ENCODE measurements at regions of chr22 and their contacts with region 1.

Region 1: GRCh38 chr22:40024201-40025061 is 29.7 kb downstream of the FAM83F start:
- DNase-seq: no peak
- H3K4me3 ChIP-seq: no peak overlapping the region
- H3K27ac ChIP-seq: no peak overlapping the region
- H3K27me3 ChIP-seq: peaks cover 17% of the 10 kb centered on the region
- CTCF ChIP-seq: peak; percentile 96

Region 2: GRCh38 chr22:39528681-39529486 is 495.5 kb before region 1 on chr22:
- CTCF ChIA-PET with region 1: interaction called, 119 read pairs
- POLR2A ChIA-PET with region 1: interaction called, 3 read pairs
- DNase-seq: peak; percentile 84
- H3K4me3 ChIP-seq: peak overlapping the region; percentile 29; the same call in 1 of the 2 replicates
- H3K27ac ChIP-seq: no peak overlapping the region
- H3K27me3 ChIP-seq: no peaks in the 10 kb centered on the region
- CTCF ChIP-seq: peak; percentile 99

Region 3: GRCh38 chr22:39543095-39543494 is 481.3 kb before region 1 on chr22:
- CTCF ChIA-PET with region 1: interaction called, 119 read pairs
- POLR2A ChIA-PET with region 1: no interaction called
- DNase-seq: no peak
- H3K4me3 ChIP-seq: no peak overlapping the region
- H3K27ac ChIP-seq: no peak overlapping the region
- H3K27me3 ChIP-seq: peaks cover 10% of the 10 kb centered on the region
- CTCF ChIP-seq: peak; percentile 51

Region 4: DNA sequence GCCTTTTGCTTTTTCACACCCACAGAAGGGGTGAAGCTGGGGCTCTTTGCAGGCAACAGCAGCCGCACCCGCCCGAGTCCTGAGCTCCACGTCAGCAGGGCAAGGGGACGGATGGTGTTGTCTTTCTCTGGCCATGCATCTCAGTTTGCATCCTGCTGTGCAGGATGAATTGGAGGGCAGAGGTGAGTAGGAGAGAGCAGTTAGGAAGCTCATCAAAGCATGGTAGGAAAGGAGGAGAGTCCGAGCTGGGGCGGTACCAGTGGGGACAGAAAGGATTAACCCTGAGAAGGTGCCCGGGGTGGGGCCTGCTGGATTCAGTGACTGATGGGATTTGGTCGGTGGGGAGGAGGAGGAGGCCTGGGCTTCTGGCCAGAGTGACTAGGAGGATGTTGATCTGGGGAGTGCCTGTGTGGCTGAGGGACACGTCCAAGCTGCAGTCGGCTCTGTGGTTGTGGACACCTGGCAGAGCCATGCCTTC is 15.1 kb before region 1 on chr22:
- CTCF ChIA-PET with region 1: interaction called, 23 read pairs
- POLR2A ChIA-PET with region 1: no interaction called
- DNase-seq: no peak
- H3K4me3 ChIP-seq: no peak overlapping the region
- H3K27ac ChIP-seq: no peak overlapping the region
- H3K27me3 ChIP-seq: peaks cover 25% of the 10 kb centered on the region
- CTCF ChIP-seq: no peak

Region 5: DNA sequence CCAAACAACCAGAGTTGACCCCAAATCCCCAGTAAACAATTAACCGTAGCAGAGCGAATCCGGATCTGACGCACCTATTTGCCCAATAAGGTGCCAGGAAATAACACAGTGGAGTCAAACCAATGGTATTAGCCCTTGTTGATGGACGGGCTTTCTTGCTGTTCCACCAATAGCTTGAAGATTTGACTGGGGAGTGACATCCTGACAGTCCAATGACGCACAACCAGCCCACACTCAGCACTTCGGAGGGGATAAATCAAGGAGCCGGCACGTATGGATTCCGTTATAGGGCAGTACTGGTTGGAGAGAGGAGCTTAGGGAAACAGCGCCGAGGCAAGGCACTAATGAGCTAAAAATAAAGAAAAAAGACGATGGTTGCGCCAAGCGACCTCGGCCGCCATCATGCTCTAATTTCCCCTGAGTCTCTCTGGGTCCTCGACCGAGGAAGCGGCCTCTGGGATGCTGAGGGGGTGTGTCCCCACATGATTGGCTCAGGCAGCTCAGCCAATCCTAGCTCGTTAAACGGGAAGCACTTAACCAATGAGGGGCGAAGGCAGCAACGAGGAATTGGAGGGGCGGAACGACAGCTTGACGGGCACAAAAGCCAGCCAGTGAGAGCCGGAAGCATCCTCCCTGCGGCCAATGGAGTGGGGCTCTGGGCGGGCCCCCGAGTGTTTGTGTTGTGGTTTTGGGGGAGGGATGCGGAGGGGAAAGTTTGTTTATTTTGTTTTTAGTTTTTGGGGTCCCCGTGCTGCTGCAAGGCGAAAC is 19.9 kb after region 1 on chr22:
- CTCF ChIA-PET with region 1: interaction called, 10 read pairs
- POLR2A ChIA-PET with region 1: interaction called, 4 read pairs
- DNase-seq: peak; percentile 99
- H3K4me3 ChIP-seq: peak overlapping the region; percentile 96
- H3K27ac ChIP-seq: peak overlapping the region; percentile 78
- H3K27me3 ChIP-seq: peaks cover 23% of the 10 kb centered on the region
- CTCF ChIP-seq: no peak

Region 6: DNA sequence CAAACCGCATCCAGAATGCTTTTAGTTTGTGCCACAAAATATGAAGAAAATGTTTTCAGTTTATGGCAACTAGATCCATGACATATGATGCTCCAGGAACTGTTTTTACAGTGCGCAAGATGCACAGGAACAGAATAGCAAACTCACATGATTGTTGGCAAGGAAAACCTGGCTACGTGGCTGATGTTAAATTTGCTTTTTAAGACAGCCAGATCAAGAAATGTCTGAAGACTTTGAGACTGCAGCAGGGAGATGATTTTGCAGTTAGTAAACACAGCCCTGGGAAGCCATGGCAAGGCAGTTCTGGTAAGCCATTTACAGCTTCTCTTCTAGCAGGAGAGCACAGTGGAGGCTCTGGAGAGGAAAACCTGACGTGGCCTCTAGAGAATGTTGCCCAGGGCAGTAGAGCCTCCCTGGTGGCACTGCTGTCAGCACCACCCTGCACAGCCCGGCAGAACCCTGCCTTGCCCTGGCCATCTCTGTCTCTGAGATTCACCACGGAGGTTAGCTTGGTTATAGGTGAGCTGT is 83.5 kb after region 1 on chr22:
- CTCF ChIA-PET with region 1: no interaction called
- POLR2A ChIA-PET with region 1: no interaction called
- DNase-seq: no peak
- H3K4me3 ChIP-seq: peak overlapping the region; percentile 14
- H3K27ac ChIP-seq: peak overlapping the region; percentile 78
- H3K27me3 ChIP-seq: no peaks in the 10 kb centered on the region
- CTCF ChIP-seq: no peak

Region 7: GRCh38 chr22:40588726-40589125 is 564.3 kb after region 1 on chr22:
- CTCF ChIA-PET with region 1: no interaction called
- POLR2A ChIA-PET with region 1: no interaction called
- DNase-seq: no peak
- H3K4me3 ChIP-seq: no peak overlapping the region
- H3K27ac ChIP-seq: no peak overlapping the region
- H3K27me3 ChIP-seq: no peaks in the 10 kb centered on the region
- CTCF ChIP-seq: no peak